ENCODE measurements at regions of chr3 and their contacts with region 1.

Region 1: GRCh38 chr3:160941885-160942494 is 163.2 kb downstream of the B3GALNT1 start:
- H3K4me3 ChIP-seq: no peak overlapping the region
- H3K27ac ChIP-seq: no peak overlapping the region
- H3K4me1 ChIP-seq: no peaks in the 10 kb centered on the region
- CTCF ChIP-seq: peak; percentile 39; the same call in 1 of the 2 replicates

Region 2: GRCh38 chr3:160686955-160687535 is 254.9 kb before region 1 on chr3:
- CTCF ChIA-PET with region 1: interaction called, 19 read pairs
- POLR2A ChIA-PET with region 1: no interaction called
- H3K4me3 ChIP-seq: no peak overlapping the region
- H3K27ac ChIP-seq: no peak overlapping the region
- H3K4me1 ChIP-seq: no peaks in the 10 kb centered on the region
- CTCF ChIP-seq: no peak

Region 3: GRCh38 chr3:160707187-160707794 is 234.7 kb before region 1 on chr3:
- CTCF ChIA-PET with region 1: interaction called, 29 read pairs
- POLR2A ChIA-PET with region 1: no interaction called
- H3K4me3 ChIP-seq: no peak overlapping the region
- H3K27ac ChIP-seq: no peak overlapping the region
- H3K4me1 ChIP-seq: no peaks in the 10 kb centered on the region
- CTCF ChIP-seq: peak; percentile 36; the same call in 1 of the 2 replicates

Region 4: GRCh38 chr3:160754855-160755747 is 186.9 kb before region 1 on chr3:
- CTCF ChIA-PET with region 1: interaction called, 10 read pairs
- POLR2A ChIA-PET with region 1: interaction called, 3 read pairs
- H3K4me3 ChIP-seq: peak overlapping the region; percentile 83
- H3K27ac ChIP-seq: peak overlapping the region; percentile 75
- H3K4me1 ChIP-seq: peaks cover 3% of the 10 kb centered on the region; the same call in 1 of the 2 replicates
- CTCF ChIP-seq: no peak

Region 5: GRCh38 chr3:160956806-160957205 is 14.8 kb after region 1 on chr3:
- CTCF ChIA-PET with region 1: no interaction called
- POLR2A ChIA-PET with region 1: no interaction called
- H3K4me3 ChIP-seq: no peak overlapping the region
- H3K27ac ChIP-seq: no peak overlapping the region
- H3K4me1 ChIP-seq: no peaks in the 10 kb centered on the region; the same call in none of the 2 replicates
- CTCF ChIP-seq: no peak

Measured in HEK293 (cell line).